ENCODE measurements at regions of chr11 and their contacts with region 1.

Region 1: DNA sequence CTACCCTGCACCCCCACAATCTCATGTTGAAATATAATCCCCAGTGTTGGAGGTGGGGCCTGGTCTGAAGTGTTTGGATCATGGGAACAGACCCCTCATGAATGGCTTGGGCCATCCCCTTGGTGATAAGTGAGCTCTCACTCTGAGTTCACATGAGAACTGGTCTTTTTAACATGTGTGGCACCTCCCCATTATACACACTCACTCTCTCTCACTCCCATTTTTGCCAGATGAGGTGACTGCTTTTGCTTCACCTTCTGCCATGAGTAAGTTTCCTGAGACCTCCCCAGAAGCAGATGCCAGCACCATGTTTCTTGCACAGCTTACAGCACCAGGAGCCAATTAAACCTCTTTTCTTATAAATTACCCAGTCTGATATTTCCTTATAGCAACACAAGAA is 32.1 kb upstream of the DRD2 start:
- DNase-seq: peak; percentile 58
- H3K4me3 ChIP-seq: no peak overlapping the region
- H3K27ac ChIP-seq: peak overlapping the region; percentile 95
- H3K4me1 ChIP-seq: peaks cover 48% of the 10 kb centered on the region
- H3K27me3 ChIP-seq: no peaks in the 10 kb centered on the region
- CTCF ChIP-seq: no peak

Region 2: DNA sequence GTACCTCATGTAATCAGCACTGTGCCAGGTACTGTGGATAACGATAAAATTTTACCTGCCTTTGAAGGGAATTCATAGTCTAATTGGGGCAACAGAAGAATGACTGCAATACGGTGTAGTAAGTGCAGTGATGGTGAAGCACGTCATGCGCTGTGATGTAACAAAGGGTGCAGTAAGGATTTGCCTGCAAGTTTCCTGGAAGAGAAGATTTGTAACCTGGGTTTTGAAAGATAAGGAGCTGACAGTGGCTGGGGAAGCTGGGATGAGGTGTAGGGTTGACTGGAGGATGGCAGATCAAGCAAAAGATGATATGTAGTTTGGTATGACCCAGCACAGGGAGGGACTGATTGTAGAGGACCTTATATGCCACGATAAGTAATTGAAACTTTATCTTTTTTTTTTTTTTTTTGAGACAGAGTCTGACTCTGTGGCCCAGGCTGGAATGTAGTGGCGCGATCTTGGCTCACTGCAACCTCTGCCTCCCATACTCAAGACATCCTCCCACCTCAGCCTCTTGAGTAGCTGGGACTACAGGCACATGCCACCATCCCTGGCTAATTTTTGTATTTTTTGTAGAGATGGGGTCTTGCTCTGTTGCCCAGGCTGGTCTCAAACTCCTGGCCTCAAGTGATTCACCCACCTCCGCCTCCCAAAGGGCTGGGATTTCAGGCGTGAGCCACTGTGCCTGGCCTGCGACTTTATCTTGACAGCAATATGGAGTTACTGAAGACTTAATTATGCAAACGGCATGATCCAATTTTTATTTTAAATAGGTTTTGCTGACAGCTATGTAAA is 1409.4 kb before region 1 on chr11:
- CTCF ChIA-PET with region 1: interaction called, 37 read pairs
- dilution Hi-C with region 1: no loop called
- in situ Hi-C with region 1: no loop called
- intact Hi-C with region 1: no loop called
- DNase-seq: no peak
- H3K4me3 ChIP-seq: no peak overlapping the region
- H3K27ac ChIP-seq: no peak overlapping the region
- H3K4me1 ChIP-seq: no peaks in the 10 kb centered on the region
- H3K27me3 ChIP-seq: no peaks in the 10 kb centered on the region
- CTCF ChIP-seq: no peak

Region 3: DNA sequence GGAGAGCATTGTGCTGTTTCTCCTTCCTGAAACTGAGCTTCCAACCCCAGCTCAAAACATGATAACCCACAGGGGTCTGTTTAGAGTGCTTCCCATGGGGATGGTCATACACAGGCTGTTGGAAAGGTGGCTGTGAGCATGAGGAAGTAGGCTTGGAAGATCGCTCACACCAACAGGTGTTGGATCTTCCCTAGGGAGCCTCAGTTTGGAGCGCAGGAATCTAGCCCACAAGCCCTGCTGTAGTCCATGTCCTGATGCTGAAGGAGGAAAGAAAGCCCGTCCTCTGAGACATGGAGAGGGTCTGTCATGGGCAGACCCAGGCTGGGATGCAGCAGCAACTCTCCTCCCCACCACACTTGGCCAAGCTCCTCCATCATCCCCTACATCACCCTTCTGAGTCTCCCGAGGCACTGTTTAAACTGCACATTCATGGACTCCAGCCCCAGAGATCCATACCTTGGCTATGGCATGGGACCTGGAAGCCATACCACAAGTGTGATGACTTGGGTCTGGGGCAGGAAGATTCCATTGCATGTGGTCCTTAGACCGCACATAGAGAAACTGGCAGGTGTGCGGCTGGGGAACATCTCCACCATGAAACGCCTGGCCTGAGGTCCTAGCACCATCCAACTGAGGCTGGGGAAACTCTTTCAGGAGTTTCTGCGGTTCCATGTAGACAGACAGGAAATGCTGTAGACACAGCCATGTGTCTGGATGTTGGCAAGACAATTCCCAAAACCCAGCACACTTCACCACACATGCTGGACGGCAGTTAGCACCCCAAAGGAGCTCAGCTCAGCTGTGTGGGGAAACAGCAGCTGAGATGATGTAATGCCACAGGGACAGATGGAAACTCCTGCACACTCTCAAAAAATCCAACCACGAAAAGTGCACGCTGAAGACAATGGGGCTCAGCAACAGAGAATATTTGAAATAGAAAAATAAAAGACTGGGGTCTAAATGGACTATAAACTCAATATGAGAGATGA is 220.5 kb before region 1 on chr11:
- CTCF ChIA-PET with region 1: no interaction called
- dilution Hi-C with region 1: no loop called
- in situ Hi-C with region 1: no loop called
- intact Hi-C with region 1: no loop called
- DNase-seq: no peak
- H3K4me3 ChIP-seq: no peak overlapping the region
- H3K27ac ChIP-seq: no peak overlapping the region
- H3K4me1 ChIP-seq: no peaks in the 10 kb centered on the region
- H3K27me3 ChIP-seq: peaks cover 2% of the 10 kb centered on the region
- CTCF ChIP-seq: no peak

Region 4: GRCh38 chr11:113567867-113568544 is 60.7 kb after region 1 on chr11:
- CTCF ChIA-PET with region 1: no interaction called
- dilution Hi-C with region 1: no loop called
- in situ Hi-C with region 1: no loop called
- intact Hi-C with region 1: no loop called
- DNase-seq: no peak
- H3K4me3 ChIP-seq: no peak overlapping the region
- H3K27ac ChIP-seq: no peak overlapping the region
- H3K4me1 ChIP-seq: peaks cover 14% of the 10 kb centered on the region
- H3K27me3 ChIP-seq: no peaks in the 10 kb centered on the region
- CTCF ChIP-seq: no peak

Measured in mammary epithelial cell (primary cell).